Naive thymus-derived CD4-positive, alpha-beta T cell (primary cell): ENCODE measurements at regions of chr11 and their contacts with region 1.

Region 1: DNA sequence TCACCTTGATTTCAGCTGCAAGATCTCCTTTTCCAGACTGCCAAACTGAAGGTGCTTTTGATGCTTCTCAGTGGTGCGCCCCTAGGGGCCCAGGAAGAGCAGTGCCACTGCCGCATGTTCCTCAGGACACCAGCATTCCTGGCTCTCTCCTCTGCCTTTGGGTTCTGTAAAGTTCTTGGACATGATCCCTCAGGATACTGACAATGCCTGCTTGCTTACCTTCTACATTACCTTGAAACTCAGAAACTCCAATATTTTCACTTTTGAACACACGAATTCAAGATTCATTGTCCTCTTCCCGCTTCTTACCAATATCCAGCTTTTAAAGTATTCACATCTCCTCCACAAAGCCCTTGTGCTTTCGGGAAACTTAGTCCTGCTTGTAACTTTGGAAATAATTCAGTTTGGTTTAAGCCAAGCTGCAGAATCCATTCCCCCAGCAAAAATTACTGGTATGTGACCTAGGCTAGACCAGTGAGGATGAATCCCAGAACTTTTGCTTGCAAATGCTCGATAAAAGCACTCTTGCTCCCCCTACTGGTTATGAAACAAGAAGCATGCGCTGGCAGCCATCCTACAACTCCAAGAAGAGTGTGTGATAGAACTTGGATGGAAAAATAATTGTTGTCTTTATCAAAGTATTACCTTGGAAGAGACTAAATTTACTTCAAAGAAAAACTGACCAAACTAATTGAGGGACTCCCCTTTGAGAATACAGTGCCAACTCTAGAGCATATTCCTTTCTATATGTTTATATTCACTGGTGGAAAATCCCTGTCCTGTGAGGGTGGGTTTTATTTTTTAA is 16.5 kb upstream of the OR5B21 start:
- DNase-seq: peak in 8 of 9 donors; percentile 39 to 78 (median 70)
- ATAC-seq: peak; percentile 78
- H3K4me3 ChIP-seq: peak overlapping the region; percentile 10
- H3K4me3 Mint-ChIP-seq: peak overlapping the region; percentile 65 to 85 (median 80)
- H3K27ac ChIP-seq: peak overlapping the region; percentile 75
- H3K27ac Mint-ChIP-seq: peak overlapping the region; percentile 84 to 99 (median 97)
- H3K4me1 ChIP-seq: peaks cover 18 to 50% of the 10 kb centered on the region in 2 donors
- H3K4me1 Mint-ChIP-seq: peaks cover 27 to 90% (median 54%) of the 10 kb centered on the region in 7 donors
- H3K27me3 ChIP-seq: no peaks in the 10 kb centered on the region
- H3K27me3 Mint-ChIP-seq: no peaks in the 10 kb centered on the region

Region 2: GRCh38 chr11:57499413-57499982 is 1024.9 kb before region 1 on chr11:
- CTCF ChIA-PET with region 1: no interaction called
- POLR2A ChIA-PET with region 1: no interaction called
- intact Hi-C with region 1: loop called in 1 of 2 experiments (anchors 10 kb)
- DNase-seq: peak in 2 of 9 donors; percentile 26 to 62
- ATAC-seq: peak; percentile 93
- H3K4me3 ChIP-seq: no peak overlapping the region
- H3K4me3 Mint-ChIP-seq: peak overlapping the region in 4 of 10 donors; percentile 1 to 57 (median 25)
- H3K27ac ChIP-seq: no peak overlapping the region
- H3K27ac Mint-ChIP-seq: no peak overlapping the region
- H3K4me1 ChIP-seq: no peaks in the 10 kb centered on the region
- H3K4me1 Mint-ChIP-seq: peaks cover 0 to 7% (median 6%) of the 10 kb centered on the region in 7 donors
- H3K27me3 ChIP-seq: no peaks in the 10 kb centered on the region
- H3K27me3 Mint-ChIP-seq: no peaks in the 10 kb centered on the region

Region 3: GRCh38 chr11:57741132-57742086 is 783.0 kb before region 1 on chr11 and contains the start of gene SELENOH:
- CTCF ChIA-PET with region 1: no interaction called
- POLR2A ChIA-PET with region 1: interaction called, 3 read pairs
- intact Hi-C with region 1: loop called (anchors 1 to 2 kb)
- DNase-seq: peak; percentile 75 to 96 (median 91)
- ATAC-seq: peak; percentile 94
- H3K4me3 ChIP-seq: peak within 1 kb of the TSS; percentile 86
- H3K4me3 Mint-ChIP-seq: peak within 1 kb of the TSS; percentile 90 to 100 (median 99)
- H3K27ac ChIP-seq: peak within 1 kb of the TSS; percentile 93
- H3K27ac Mint-ChIP-seq: peak within 1 kb of the TSS; percentile 97 to 100 (median 98)
- H3K4me1 ChIP-seq: peaks cover 16 to 23% of the 10 kb centered on the region in 2 donors
- H3K4me1 Mint-ChIP-seq: peaks cover 12 to 50% (median 41%) of the 10 kb centered on the region in 7 donors
- H3K27me3 ChIP-seq: no peaks in the 10 kb centered on the region
- H3K27me3 Mint-ChIP-seq: no peaks in the 10 kb centered on the region
- total RNA-seq, gene SELENOH: 93.6 to 193 (median 124) TPM

Region 4: GRCh38 chr11:57792060-57792541 is 732.3 kb before region 1 on chr11:
- CTCF ChIA-PET with region 1: interaction called, 4 read pairs
- POLR2A ChIA-PET with region 1: no interaction called
- intact Hi-C with region 1: loop called (anchors 1 to 2 kb)
- DNase-seq: peak; percentile 69 to 93 (median 90)
- ATAC-seq: peak; percentile 96
- H3K4me3 ChIP-seq: peak overlapping the region; percentile 15
- H3K4me3 Mint-ChIP-seq: peak overlapping the region; percentile 55 to 88 (median 77)
- H3K27ac ChIP-seq: peak overlapping the region; percentile 83
- H3K27ac Mint-ChIP-seq: peak overlapping the region; percentile 90 to 99 (median 99)
- H3K4me1 ChIP-seq: peaks cover 21 to 29% of the 10 kb centered on the region in 2 donors
- H3K4me1 Mint-ChIP-seq: peaks cover 37 to 53% (median 44%) of the 10 kb centered on the region in 7 donors
- H3K27me3 ChIP-seq: no peaks in the 10 kb centered on the region
- H3K27me3 Mint-ChIP-seq: peaks cover 0 to 2% (median 0%) of the 10 kb centered on the region in 5 donors

Region 5: DNA sequence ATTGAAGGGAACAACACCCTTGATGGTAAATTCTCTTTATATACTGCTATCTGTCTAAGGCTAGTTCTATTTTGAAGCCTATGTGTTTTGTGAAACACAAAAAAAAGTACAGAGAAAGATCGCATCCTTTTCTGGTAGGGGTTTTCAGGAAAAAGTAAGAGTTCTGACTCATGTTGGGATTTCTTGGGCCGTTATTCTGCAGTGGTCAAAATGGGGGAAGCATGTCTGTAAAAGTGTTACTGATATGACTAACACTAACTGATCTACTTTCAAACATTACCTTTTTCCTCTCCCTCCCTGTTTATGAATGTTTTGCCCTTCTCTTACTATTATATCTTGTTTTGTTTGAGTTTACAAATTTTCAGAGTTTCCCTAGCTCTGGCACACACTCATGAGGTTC is 709.0 kb before region 1 on chr11:
- CTCF ChIA-PET with region 1: no interaction called
- POLR2A ChIA-PET with region 1: no interaction called
- intact Hi-C with region 1: loop called in 1 of 2 experiments (anchors 5 kb)
- DNase-seq: no peak
- ATAC-seq: no peak
- H3K4me3 ChIP-seq: no peak overlapping the region
- H3K4me3 Mint-ChIP-seq: no peak overlapping the region
- H3K27ac ChIP-seq: no peak overlapping the region
- H3K27ac Mint-ChIP-seq: peak overlapping the region in 2 of 9 donors; percentile 4 to 40
- H3K4me1 ChIP-seq: no peaks in the 10 kb centered on the region
- H3K4me1 Mint-ChIP-seq: peaks cover 0 to 10% (median 0%) of the 10 kb centered on the region in 7 donors
- H3K27me3 ChIP-seq: no peaks in the 10 kb centered on the region
- H3K27me3 Mint-ChIP-seq: no peaks in the 10 kb centered on the region

Region 6: DNA sequence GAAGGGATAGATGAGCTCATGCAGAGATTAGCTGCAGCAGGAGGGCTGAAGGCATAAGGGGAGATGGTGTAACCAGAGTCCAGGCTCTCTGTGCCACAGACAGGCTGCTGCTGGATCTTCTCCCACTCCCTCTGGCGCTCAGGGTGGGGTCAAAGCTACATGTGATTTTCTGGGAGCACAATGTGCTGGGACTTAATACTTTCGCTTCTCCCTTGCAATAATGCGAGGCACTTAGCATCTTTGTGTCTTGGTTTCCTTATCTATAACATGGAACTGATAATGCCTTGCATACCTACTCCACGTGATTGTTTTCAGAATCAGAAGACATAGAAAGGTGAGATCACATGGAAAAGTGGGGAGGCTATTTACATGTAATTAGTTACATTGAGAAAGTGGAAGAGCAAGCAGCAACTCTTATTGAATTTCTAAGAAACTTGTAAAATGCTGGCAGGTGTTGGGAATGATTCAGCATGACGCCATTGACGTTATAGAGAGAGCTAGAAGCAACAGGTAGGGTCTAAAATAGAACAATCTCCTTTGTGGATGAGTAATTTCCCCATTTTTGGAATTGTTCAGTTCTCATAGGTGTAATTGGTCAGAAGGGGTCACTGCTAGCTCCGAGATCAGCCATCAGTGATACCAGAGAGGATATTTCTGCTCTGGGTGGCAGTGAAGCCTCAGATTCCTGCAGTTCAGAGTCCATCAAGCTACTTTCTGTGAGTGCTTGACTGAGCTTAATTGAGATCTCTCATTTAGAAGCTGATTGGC is 390.9 kb before region 1 on chr11:
- CTCF ChIA-PET with region 1: no interaction called
- POLR2A ChIA-PET with region 1: no interaction called
- intact Hi-C with region 1: loop called in 1 of 2 experiments (anchors 10 kb)
- DNase-seq: no peak
- ATAC-seq: no peak
- H3K4me3 ChIP-seq: no peak overlapping the region
- H3K4me3 Mint-ChIP-seq: no peak overlapping the region
- H3K27ac ChIP-seq: no peak overlapping the region
- H3K27ac Mint-ChIP-seq: no peak overlapping the region
- H3K4me1 ChIP-seq: no peaks in the 10 kb centered on the region
- H3K4me1 Mint-ChIP-seq: no peaks in the 10 kb centered on the region
- H3K27me3 ChIP-seq: no peaks in the 10 kb centered on the region
- H3K27me3 Mint-ChIP-seq: peaks cover 0 to 11% (median 3%) of the 10 kb centered on the region in 5 donors

Region 7: DNA sequence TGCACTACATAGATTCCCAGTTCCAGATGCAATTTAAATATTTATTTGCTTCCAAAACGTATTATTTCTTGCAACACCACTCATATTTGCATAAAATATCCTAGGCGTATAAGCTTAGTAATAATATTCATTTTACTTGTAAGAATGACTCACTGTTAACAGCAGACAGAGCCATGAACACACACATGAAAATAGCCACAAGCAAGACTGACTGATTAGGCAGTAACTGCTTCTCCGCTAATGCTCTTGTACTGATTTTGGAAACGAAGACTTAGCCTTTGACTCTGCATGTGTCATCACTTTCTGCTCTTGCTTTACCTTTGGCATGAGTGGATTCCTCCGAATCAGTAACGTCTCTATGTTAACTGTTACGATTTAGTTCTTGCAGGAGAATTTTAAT is 301.7 kb before region 1 on chr11:
- CTCF ChIA-PET with region 1: no interaction called
- POLR2A ChIA-PET with region 1: no interaction called
- intact Hi-C with region 1: no loop called
- DNase-seq: no peak
- ATAC-seq: no peak
- H3K4me3 ChIP-seq: no peak overlapping the region
- H3K4me3 Mint-ChIP-seq: no peak overlapping the region
- H3K27ac ChIP-seq: no peak overlapping the region
- H3K27ac Mint-ChIP-seq: no peak overlapping the region
- H3K4me1 ChIP-seq: no peaks in the 10 kb centered on the region
- H3K4me1 Mint-ChIP-seq: no peaks in the 10 kb centered on the region
- H3K27me3 ChIP-seq: no peaks in the 10 kb centered on the region
- H3K27me3 Mint-ChIP-seq: peaks cover 0 to 17% (median 8%) of the 10 kb centered on the region in 5 donors

Region 8: GRCh38 chr11:58573451-58574104 is 49.1 kb after region 1 on chr11:
- CTCF ChIA-PET with region 1: interaction called, 27 read pairs
- POLR2A ChIA-PET with region 1: interaction called, 140 read pairs
- intact Hi-C with region 1: loop called (anchors 1 kb)
- DNase-seq: peak in 8 of 9 donors; percentile 41 to 66 (median 58)
- ATAC-seq: peak; percentile 29
- H3K4me3 ChIP-seq: peak overlapping the region; percentile 99
- H3K4me3 Mint-ChIP-seq: peak overlapping the region; percentile 87 to 99 (median 96)
- H3K27ac ChIP-seq: peak overlapping the region; percentile 98
- H3K27ac Mint-ChIP-seq: peak overlapping the region; percentile 90 to 100 (median 98)
- H3K4me1 ChIP-seq: peaks cover 29 to 44% of the 10 kb centered on the region in 2 donors
- H3K4me1 Mint-ChIP-seq: peaks cover 27 to 84% (median 70%) of the 10 kb centered on the region in 7 donors
- H3K27me3 ChIP-seq: no peaks in the 10 kb centered on the region
- H3K27me3 Mint-ChIP-seq: peaks cover 0 to 5% (median 0%) of the 10 kb centered on the region in 5 donors